Ovary (tissue), 10 donors: ENCODE measurements at regions of chr6 and their contacts with region 1.

Region 1: GRCh38 chr6:136191606-136192312 is 58.4 kb downstream of the MTFR2 start:
- DNase-seq: no peak
- H3K4me3 ChIP-seq: no peak overlapping the region
- H3K27ac ChIP-seq: no peak overlapping the region
- H3K4me1 ChIP-seq: peaks cover 5% of the 10 kb centered on the region
- H3K27me3 ChIP-seq: no peaks in the 10 kb centered on the region
- CTCF ChIP-seq: no peak
- EP300 ChIP-seq: no peak
- POLR2A ChIP-seq: no peak

Region 2: DNA sequence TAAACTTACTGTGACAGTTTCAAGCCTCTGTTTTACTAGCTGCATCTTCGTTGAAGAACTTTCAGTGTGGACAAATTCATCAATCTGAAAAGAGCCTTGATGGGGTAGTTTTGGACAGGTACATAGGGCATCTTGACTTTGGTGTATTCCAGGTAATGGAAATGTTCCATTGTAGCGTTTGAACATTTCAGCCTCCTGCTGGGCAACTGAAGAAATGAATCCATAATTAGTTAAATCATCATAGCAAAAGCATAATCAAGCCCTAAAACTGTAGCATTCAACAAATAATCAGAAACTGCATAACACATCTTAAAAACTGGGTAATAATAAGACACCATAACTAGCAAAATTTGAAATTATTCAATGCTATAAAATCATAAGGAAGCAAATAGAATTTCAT is 780.4 kb before region 1 on chr6:
- intact Hi-C with region 1: loop called in 1 of 4 experiments (anchors 10 kb)
- DNase-seq: no peak
- H3K4me3 ChIP-seq: no peak overlapping the region
- H3K27ac ChIP-seq: no peak overlapping the region
- H3K4me1 ChIP-seq: no peaks in the 10 kb centered on the region
- H3K27me3 ChIP-seq: no peaks in the 10 kb centered on the region
- CTCF ChIP-seq: no peak
- EP300 ChIP-seq: no peak
- POLR2A ChIP-seq: no peak

Region 3: GRCh38 chr6:136657666-136658065 is 465.9 kb after region 1 on chr6:
- intact Hi-C with region 1: no loop called
- DNase-seq: no peak
- H3K4me3 ChIP-seq: no peak overlapping the region
- H3K27ac ChIP-seq: no peak overlapping the region
- H3K4me1 ChIP-seq: peaks cover 2% of the 10 kb centered on the region
- H3K27me3 ChIP-seq: no peaks in the 10 kb centered on the region
- CTCF ChIP-seq: no peak
- EP300 ChIP-seq: no peak
- POLR2A ChIP-seq: no peak